ENCODE measurements at regions of chr4 and their contacts with region 1.

Region 1: DNA sequence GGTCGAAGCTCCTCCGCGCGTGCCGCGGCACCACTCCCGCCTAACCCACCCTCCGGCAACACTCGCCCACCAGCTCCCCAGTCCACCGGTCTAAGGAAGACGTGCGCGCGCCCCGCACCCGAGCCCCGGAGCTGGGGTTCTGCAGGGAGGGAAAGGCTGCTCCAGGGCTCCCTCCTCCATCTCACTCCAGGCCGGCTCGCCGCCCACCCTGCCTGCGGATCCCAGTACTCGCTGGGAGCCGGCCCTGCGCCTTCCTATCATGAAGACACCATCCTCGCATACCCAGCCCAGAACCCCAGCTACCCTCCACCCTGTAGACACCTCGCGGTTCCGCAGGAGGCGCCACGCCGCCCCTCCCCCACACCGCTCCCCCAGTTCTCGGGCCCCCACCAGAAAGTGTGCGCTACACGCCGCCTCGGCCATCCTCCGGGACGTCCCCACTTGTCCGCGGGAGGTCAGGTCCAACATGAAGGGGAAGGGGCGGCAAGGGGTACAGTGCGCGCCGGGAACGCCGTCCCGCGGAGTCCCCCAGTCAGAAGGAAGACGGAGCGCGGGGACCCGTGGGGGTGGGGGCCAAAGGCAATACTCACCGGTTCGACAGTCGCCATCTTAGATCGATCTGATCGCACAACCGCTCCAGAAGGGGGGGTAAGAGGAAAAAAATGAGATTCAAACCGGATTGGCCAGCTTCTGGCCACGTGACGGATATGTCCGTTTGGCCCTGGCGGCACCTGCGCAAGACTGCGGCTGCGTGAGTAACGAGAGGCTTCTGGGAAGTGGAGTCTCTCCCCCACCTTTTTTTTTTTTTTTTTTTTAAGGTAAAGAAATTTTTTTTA is at the start of gene EIF4E:
- DNase-seq: peak; percentile 98
- H3K4me3 Mint-ChIP-seq: peak within 1 kb of the TSS; percentile 88
- H3K27ac Mint-ChIP-seq: peak within 1 kb of the TSS; percentile 99
- H3K4me1 Mint-ChIP-seq: peaks cover 35% of the 10 kb centered on the region
- H3K27me3 Mint-ChIP-seq: no peaks in the 10 kb centered on the region
- total RNA-seq, gene EIF4E: 121 to 124 TPM

Region 2: GRCh38 chr4:98467627-98468072 is 461.1 kb before region 1 on chr4:
- CTCF ChIA-PET with region 1: interaction called, 7 read pairs
- POLR2A ChIA-PET with region 1: no interaction called
- intact Hi-C with region 1: loop called (anchors 5 kb)
- DNase-seq: peak; percentile 82
- H3K4me3 Mint-ChIP-seq: peak overlapping the region; percentile 67
- H3K27ac Mint-ChIP-seq: no peak overlapping the region
- H3K4me1 Mint-ChIP-seq: peaks cover 27% of the 10 kb centered on the region
- H3K27me3 Mint-ChIP-seq: no peaks in the 10 kb centered on the region

Region 3: GRCh38 chr4:98639523-98639922 is 289.2 kb before region 1 on chr4:
- CTCF ChIA-PET with region 1: no interaction called
- POLR2A ChIA-PET with region 1: no interaction called
- intact Hi-C with region 1: loop called (anchors 1 kb)
- DNase-seq: no peak
- H3K4me3 Mint-ChIP-seq: peak overlapping the region; percentile 66
- H3K27ac Mint-ChIP-seq: peak overlapping the region; percentile 74
- H3K4me1 Mint-ChIP-seq: peaks cover 56% of the 10 kb centered on the region
- H3K27me3 Mint-ChIP-seq: no peaks in the 10 kb centered on the region

Region 4: GRCh38 chr4:98995183-98996055 is 66.7 kb after region 1 on chr4 and contains the start of gene METAP1:
- CTCF ChIA-PET with region 1: interaction called, 39 read pairs
- POLR2A ChIA-PET with region 1: interaction called, 53 read pairs
- intact Hi-C with region 1: loop called (anchors 1 kb)
- DNase-seq: peak; percentile 97
- H3K4me3 Mint-ChIP-seq: peak within 1 kb of the TSS; percentile 88
- H3K27ac Mint-ChIP-seq: peak within 1 kb of the TSS; percentile 96
- H3K4me1 Mint-ChIP-seq: peaks cover 37% of the 10 kb centered on the region
- H3K27me3 Mint-ChIP-seq: no peaks in the 10 kb centered on the region
- total RNA-seq, gene METAP1: 60.7 to 61.1 TPM

Region 5: GRCh38 chr4:99504804-99505569 is 576.3 kb after region 1 on chr4:
- CTCF ChIA-PET with region 1: no interaction called
- POLR2A ChIA-PET with region 1: no interaction called
- intact Hi-C with region 1: loop called (anchors 5 kb)
- DNase-seq: no peak
- H3K4me3 Mint-ChIP-seq: no peak overlapping the region
- H3K27ac Mint-ChIP-seq: no peak overlapping the region
- H3K4me1 Mint-ChIP-seq: peaks cover 46% of the 10 kb centered on the region
- H3K27me3 Mint-ChIP-seq: no peaks in the 10 kb centered on the region